CD4-positive, alpha-beta T cell (primary cell): ENCODE measurements at regions of chr11 and their contacts with region 1.

Region 1: GRCh38 chr11:73965076-73965860 is 14.4 kb downstream of the DNAJB13 start:
- DNase-seq: peak in 1 of 14 experiments; percentile 35
- ATAC-seq: no peak
- H3K4me3 ChIP-seq: no peak overlapping the region
- H3K4me3 Mint-ChIP-seq: no peak overlapping the region
- H3K27ac ChIP-seq: no peak overlapping the region
- H3K27ac Mint-ChIP-seq: peak overlapping the region; percentile 73
- H3K4me1 ChIP-seq: peaks cover 63% of the 10 kb centered on the region
- H3K4me1 Mint-ChIP-seq: peaks cover 52% of the 10 kb centered on the region
- H3K27me3 ChIP-seq: no peaks in the 10 kb centered on the region
- H3K27me3 Mint-ChIP-seq: no peaks in the 10 kb centered on the region
- CTCF ChIP-seq: no peak

Region 2: GRCh38 chr11:73939096-73939495 is 26.2 kb before region 1 on chr11:
- CTCF ChIA-PET with region 1: no interaction called
- POLR2A ChIA-PET with region 1: no interaction called
- intact Hi-C with region 1: no loop called
- DNase-seq: no peak
- ATAC-seq: no peak
- H3K4me3 ChIP-seq: no peak overlapping the region
- H3K4me3 Mint-ChIP-seq: no peak overlapping the region
- H3K27ac ChIP-seq: no peak overlapping the region
- H3K27ac Mint-ChIP-seq: no peak overlapping the region
- H3K4me1 ChIP-seq: no peaks in the 10 kb centered on the region
- H3K4me1 Mint-ChIP-seq: no peaks in the 10 kb centered on the region
- H3K27me3 ChIP-seq: no peaks in the 10 kb centered on the region
- H3K27me3 Mint-ChIP-seq: no peaks in the 10 kb centered on the region
- CTCF ChIP-seq: no peak

Region 3: DNA sequence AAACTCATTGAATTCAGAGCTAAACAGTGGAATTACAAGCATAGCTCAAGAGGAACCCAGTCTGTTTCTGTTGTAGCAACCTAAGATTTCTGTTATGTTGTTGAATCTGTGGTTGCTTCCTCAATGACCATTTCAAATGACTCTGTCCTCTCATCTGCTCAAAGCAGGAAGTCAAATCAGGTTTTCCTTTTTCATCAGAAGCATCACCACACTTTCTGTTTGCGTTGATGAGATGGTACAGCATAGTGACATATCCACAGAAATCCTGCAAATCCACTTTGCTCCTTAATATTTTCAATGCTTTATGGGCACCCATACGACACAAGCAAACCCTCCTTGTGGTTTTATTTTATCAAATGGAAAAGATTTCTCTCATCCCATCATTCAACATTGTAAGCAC is 30.0 kb after region 1 on chr11:
- CTCF ChIA-PET with region 1: interaction called, 3 read pairs
- POLR2A ChIA-PET with region 1: interaction called, 137 read pairs
- intact Hi-C with region 1: no loop called
- DNase-seq: peak in 3 of 14 experiments; percentile 86 to 93 (median 89)
- ATAC-seq: peak; percentile 79
- H3K4me3 ChIP-seq: peak overlapping the region; percentile 35
- H3K4me3 Mint-ChIP-seq: peak overlapping the region; percentile 79
- H3K27ac ChIP-seq: peak overlapping the region; percentile 80 to 92
- H3K27ac Mint-ChIP-seq: peak overlapping the region; percentile 95
- H3K4me1 ChIP-seq: peaks cover 54% of the 10 kb centered on the region
- H3K4me1 Mint-ChIP-seq: peaks cover 76% of the 10 kb centered on the region
- H3K27me3 ChIP-seq: no peaks in the 10 kb centered on the region
- H3K27me3 Mint-ChIP-seq: no peaks in the 10 kb centered on the region
- CTCF ChIP-seq: no peak

Region 4: GRCh38 chr11:74011360-74012073 is 46.2 kb after region 1 on chr11:
- CTCF ChIA-PET with region 1: no interaction called
- POLR2A ChIA-PET with region 1: interaction called, 316 read pairs
- intact Hi-C with region 1: no loop called
- DNase-seq: peak in 9 of 14 experiments; percentile 19 to 75 (median 38)
- ATAC-seq: peak; percentile 74
- H3K4me3 ChIP-seq: no peak overlapping the region
- H3K4me3 Mint-ChIP-seq: peak overlapping the region; percentile 34
- H3K27ac ChIP-seq: peak overlapping the region; percentile 55 to 58
- H3K27ac Mint-ChIP-seq: peak overlapping the region; percentile 92
- H3K4me1 ChIP-seq: peaks cover 100% of the 10 kb centered on the region
- H3K4me1 Mint-ChIP-seq: peaks cover 92% of the 10 kb centered on the region
- H3K27me3 ChIP-seq: no peaks in the 10 kb centered on the region
- H3K27me3 Mint-ChIP-seq: no peaks in the 10 kb centered on the region
- CTCF ChIP-seq: no peak

Region 5: GRCh38 chr11:74090701-74091100 is 125.4 kb after region 1 on chr11:
- CTCF ChIA-PET with region 1: interaction called, 4 read pairs
- POLR2A ChIA-PET with region 1: interaction called, 3 read pairs
- intact Hi-C with region 1: loop called (anchors 1 to 2 kb)
- DNase-seq: peak in 4 of 14 experiments; percentile 19 to 52 (median 38)
- ATAC-seq: no peak
- H3K4me3 ChIP-seq: no peak overlapping the region
- H3K4me3 Mint-ChIP-seq: no peak overlapping the region
- H3K27ac ChIP-seq: no peak overlapping the region
- H3K27ac Mint-ChIP-seq: no peak overlapping the region
- H3K4me1 ChIP-seq: no peaks in the 10 kb centered on the region
- H3K4me1 Mint-ChIP-seq: no peaks in the 10 kb centered on the region
- H3K27me3 ChIP-seq: no peaks in the 10 kb centered on the region
- H3K27me3 Mint-ChIP-seq: no peaks in the 10 kb centered on the region
- CTCF ChIP-seq: no peak